Transverse colon (tissue), 4 donors: ENCODE measurements at regions of chr15 and their contacts with region 1.

Region 1: DNA sequence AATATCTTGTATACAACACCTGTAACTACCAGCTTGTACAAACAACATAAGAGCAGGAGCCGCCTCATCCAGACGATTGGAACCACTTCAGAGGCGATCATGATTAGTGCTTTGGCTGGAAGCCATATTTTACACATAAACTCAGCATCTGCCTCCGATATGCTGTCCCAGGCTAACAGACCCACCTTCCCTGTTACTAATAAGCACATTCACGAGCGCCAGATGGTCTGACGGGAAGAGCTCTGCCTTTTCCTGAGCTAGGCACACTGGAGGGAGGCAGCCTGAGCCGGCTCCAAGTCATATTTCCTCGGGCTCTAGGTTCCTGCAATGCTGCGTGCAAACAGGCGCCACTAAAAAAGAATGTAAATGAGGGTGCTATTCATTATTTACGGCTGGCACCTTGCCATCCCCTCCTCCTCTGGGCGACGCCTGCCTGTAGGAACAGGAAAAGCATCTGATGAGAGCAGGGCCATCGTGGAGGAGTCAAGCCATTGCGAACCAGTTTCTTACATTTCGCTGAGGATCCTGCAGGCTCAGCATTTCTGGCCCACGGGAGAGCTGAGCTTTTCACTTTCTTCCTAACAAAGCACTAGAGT is 98.2 kb downstream of the ANXA2 start:
- DNase-seq: peak; percentile 53
- H3K4me3 ChIP-seq: no peak overlapping the region
- H3K27ac ChIP-seq: no peak overlapping the region
- H3K4me1 ChIP-seq: peaks cover 0 to 12% (median 8%) of the 10 kb centered on the region in 4 donors
- H3K27me3 ChIP-seq: no peaks in the 10 kb centered on the region
- CTCF ChIP-seq: peak in 3 of 5 experiments; percentile 33 to 40 (median 37)
- EP300 ChIP-seq: no peak
- POLR2A ChIP-seq: no peak

Region 2: GRCh38 chr15:59917504-59918157 is 381.9 kb before region 1 on chr15:
- in situ Hi-C with region 1: loop called in 1 of 4 experiments (anchors 25 kb)
- intact Hi-C with region 1: no loop called
- DNase-seq: peak; percentile 76
- H3K4me3 ChIP-seq: no peak overlapping the region
- H3K27ac ChIP-seq: no peak overlapping the region
- H3K4me1 ChIP-seq: no peaks in the 10 kb centered on the region
- H3K27me3 ChIP-seq: peaks cover 25% of the 10 kb centered on the region
- CTCF ChIP-seq: peak; percentile 28 to 61 (median 43)
- EP300 ChIP-seq: no peak
- POLR2A ChIP-seq: no peak